Activated CD4-positive, alpha-beta T cell treated with anti-CD3 and anti-CD28 coated beads for 36 hours (primary cell): ENCODE measurements at regions of chr1 and their contacts with region 1.

Region 1: GRCh38 chr1:156705918-156706656 is 704 bp upstream of the CRABP2 start:
- DNase-seq: peak; percentile 88
- ATAC-seq: peak; percentile 80
- H3K4me3 Mint-ChIP-seq: peak overlapping the region; percentile 71
- H3K27ac Mint-ChIP-seq: peak overlapping the region; percentile 58
- H3K4me1 Mint-ChIP-seq: peaks cover 24% of the 10 kb centered on the region
- H3K27me3 Mint-ChIP-seq: peaks cover 20% of the 10 kb centered on the region

Region 2: GRCh38 chr1:156591432-156592157 is 114.5 kb before region 1 on chr1 and contains the start of gene NAXE:
- CTCF ChIA-PET with region 1: no interaction called
- POLR2A ChIA-PET with region 1: no interaction called
- intact Hi-C with region 1: no loop called
- DNase-seq: peak; percentile 82
- ATAC-seq: peak; percentile 94
- H3K4me3 Mint-ChIP-seq: peak within 1 kb of the TSS; percentile 80
- H3K27ac Mint-ChIP-seq: peak within 1 kb of the TSS; percentile 93
- H3K4me1 Mint-ChIP-seq: peaks cover 24% of the 10 kb centered on the region
- H3K27me3 Mint-ChIP-seq: no peaks in the 10 kb centered on the region
- total RNA-seq, gene NAXE: 79.9 to 82.0 TPM

Region 3: GRCh38 chr1:156717275-156717805 is 11.3 kb after region 1 on chr1:
- CTCF ChIA-PET with region 1: interaction called, 25 read pairs
- POLR2A ChIA-PET with region 1: interaction called, 3 read pairs
- intact Hi-C with region 1: no loop called
- DNase-seq: no peak
- ATAC-seq: no peak
- H3K4me3 Mint-ChIP-seq: no peak overlapping the region
- H3K27ac Mint-ChIP-seq: no peak overlapping the region
- H3K4me1 Mint-ChIP-seq: peaks cover 8% of the 10 kb centered on the region
- H3K27me3 Mint-ChIP-seq: no peaks in the 10 kb centered on the region